ENCODE measurements at regions of chr9 and their contacts with region 1.

Region 1: GRCh38 chr9:74773886-74774479 is 113.7 kb downstream of the TRPM6 start:
- DNase-seq: peak in 3 of 4 donors; percentile 65 to 85 (median 70)
- ATAC-seq: peak; percentile 91
- H3K4me3 ChIP-seq: no peak overlapping the region
- H3K27ac ChIP-seq: no peak overlapping the region
- H3K4me1 ChIP-seq: no peaks in the 10 kb centered on the region
- H3K27me3 ChIP-seq: no peaks in the 10 kb centered on the region
- CTCF ChIP-seq: peak; percentile 94 to 96

Region 2: GRCh38 chr9:74595286-74595685 is 178.7 kb before region 1 on chr9:
- intact Hi-C with region 1: no loop called
- DNase-seq: peak in 1 of 4 donors; percentile 5
- ATAC-seq: no peak
- H3K4me3 ChIP-seq: no peak overlapping the region
- H3K27ac ChIP-seq: no peak overlapping the region
- H3K4me1 ChIP-seq: no peaks in the 10 kb centered on the region
- H3K27me3 ChIP-seq: no peaks in the 10 kb centered on the region
- CTCF ChIP-seq: no peak

Region 3: DNA sequence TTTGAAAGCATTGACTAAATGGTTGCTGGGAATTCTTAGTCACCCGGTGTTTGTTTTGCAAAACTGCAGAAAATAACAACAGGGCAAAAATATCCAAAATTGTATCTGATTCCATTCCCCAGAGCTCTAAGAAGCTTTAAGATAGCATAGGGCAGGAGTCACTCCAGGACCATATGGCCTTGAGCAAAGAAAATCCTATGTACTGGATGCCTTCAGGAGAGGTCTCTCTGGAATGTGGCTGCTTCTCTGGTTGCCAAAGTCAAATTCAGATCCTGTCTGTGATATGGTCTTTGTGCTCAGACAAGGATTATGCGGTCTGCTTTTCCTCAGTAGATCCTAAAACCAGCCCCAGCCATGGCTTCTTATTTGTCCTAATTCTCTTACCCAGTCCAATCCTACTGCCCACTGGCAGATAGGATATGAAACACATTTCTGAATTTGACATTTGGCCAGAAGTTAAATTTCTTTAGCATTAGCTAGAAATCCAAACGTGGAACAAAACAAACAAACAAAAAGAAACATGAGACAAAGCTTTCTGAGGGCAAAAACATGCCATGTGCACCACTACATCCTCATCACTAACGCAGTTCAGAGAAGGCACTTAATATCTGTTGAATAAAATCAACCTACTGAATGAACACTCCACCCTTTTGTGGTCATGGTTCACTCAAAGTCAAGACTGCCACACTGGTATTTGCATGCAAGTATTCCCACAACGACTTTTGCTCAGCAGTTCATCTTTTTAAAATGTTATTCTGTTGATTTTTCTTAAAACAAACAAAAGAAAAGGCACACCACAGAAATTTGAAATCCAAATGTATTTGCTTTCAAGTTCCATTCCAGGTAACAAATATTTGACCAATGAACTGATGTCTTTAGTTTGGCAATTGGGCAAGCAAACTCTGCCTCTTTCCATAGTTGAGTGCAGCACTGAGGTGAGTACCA is 52.0 kb before region 1 on chr9:
- intact Hi-C with region 1: no loop called
- DNase-seq: no peak
- ATAC-seq: no peak
- H3K4me3 ChIP-seq: no peak overlapping the region
- H3K27ac ChIP-seq: no peak overlapping the region
- H3K4me1 ChIP-seq: no peaks in the 10 kb centered on the region
- H3K27me3 ChIP-seq: no peaks in the 10 kb centered on the region
- CTCF ChIP-seq: no peak

Region 4: DNA sequence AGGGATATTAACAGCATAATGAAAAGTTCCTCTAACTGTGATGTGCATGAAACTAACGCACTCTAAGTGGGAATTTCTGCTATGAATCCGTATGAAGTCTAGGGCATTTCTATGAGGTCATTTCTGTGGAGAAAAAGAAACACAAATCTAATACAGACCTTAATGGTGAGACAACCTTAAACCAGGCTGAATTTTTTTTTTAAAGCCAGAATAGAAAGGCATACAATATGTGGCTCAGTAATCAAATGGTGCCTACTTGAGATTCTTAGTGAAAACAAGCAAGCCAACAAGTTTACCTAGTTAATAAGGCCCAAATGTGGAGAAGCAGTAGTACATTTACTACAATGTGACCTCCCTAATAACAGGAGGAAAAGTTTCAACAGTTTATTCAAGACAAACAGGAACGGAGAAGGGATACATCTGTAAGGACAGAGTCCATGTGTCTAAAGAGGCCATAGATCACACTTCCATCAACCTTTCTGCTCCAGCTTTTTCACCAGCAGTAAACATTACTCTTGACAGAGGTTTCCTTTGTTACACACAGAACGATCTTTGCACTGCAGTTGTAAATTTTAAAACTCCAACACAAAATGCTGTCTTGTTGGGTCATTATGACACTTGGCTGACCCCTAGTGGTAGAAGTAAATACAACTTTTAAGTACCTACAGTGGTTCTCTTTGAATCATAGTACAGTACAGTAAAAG is 227.9 kb after region 1 on chr9:
- intact Hi-C with region 1: loop called in 1 of 2 experiments (anchors 5 kb)
- DNase-seq: peak in 2 of 4 donors; percentile 72 to 90
- ATAC-seq: peak; percentile 99
- H3K4me3 ChIP-seq: no peak overlapping the region
- H3K27ac ChIP-seq: no peak overlapping the region
- H3K4me1 ChIP-seq: peaks cover 3 to 5% of the 10 kb centered on the region in 2 donors
- H3K27me3 ChIP-seq: no peaks in the 10 kb centered on the region
- CTCF ChIP-seq: peak; percentile 67 to 73

Region 5: DNA sequence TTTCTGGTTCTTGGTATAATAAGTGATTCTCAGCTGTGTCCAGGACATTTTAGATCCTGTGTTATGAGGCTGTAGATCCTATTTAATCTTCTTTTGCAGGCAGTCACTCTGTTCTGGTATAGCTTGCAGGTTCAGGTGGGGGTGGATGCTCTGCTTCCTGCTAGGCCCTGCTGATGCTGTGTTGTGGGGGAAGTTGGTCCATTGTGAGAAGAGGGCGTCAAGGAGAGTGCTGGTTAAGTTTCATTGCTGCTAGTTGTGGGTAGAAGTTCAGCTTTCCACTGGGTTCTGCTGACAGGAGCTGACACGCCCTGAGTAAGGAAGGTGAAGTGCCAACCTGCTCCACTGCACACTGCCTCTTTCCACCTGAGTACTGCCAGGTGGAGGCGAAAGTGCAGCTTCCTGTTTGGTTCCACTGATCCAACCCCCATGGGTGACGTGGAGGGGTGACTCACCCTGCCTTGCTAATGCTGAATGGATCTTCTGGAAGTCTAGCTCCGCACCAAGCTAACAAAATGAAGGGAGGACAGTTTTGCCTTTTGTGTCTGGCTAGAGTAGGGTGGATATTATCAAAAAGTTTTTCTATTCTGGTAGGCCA is 297.6 kb after region 1 on chr9:
- intact Hi-C with region 1: loop called in 1 of 2 experiments (anchors 5 kb)
- DNase-seq: peak in 2 of 4 donors; percentile 75 to 80
- ATAC-seq: peak; percentile 99
- H3K4me3 ChIP-seq: no peak overlapping the region
- H3K27ac ChIP-seq: no peak overlapping the region
- H3K4me1 ChIP-seq: no peaks in the 10 kb centered on the region
- H3K27me3 ChIP-seq: no peaks in the 10 kb centered on the region
- CTCF ChIP-seq: no peak

Measured in left lung (tissue), 14 donors.